Activated CD8-positive, alpha-beta T cell treated with anti-CD3 and anti-CD28 coated beads, Interleukin-2, amount 10 ng/mL, durations not matched to agents 7 days and 5 days (primary cell): ENCODE measurements at regions of chr16 and their contacts with region 1.

Region 1: DNA sequence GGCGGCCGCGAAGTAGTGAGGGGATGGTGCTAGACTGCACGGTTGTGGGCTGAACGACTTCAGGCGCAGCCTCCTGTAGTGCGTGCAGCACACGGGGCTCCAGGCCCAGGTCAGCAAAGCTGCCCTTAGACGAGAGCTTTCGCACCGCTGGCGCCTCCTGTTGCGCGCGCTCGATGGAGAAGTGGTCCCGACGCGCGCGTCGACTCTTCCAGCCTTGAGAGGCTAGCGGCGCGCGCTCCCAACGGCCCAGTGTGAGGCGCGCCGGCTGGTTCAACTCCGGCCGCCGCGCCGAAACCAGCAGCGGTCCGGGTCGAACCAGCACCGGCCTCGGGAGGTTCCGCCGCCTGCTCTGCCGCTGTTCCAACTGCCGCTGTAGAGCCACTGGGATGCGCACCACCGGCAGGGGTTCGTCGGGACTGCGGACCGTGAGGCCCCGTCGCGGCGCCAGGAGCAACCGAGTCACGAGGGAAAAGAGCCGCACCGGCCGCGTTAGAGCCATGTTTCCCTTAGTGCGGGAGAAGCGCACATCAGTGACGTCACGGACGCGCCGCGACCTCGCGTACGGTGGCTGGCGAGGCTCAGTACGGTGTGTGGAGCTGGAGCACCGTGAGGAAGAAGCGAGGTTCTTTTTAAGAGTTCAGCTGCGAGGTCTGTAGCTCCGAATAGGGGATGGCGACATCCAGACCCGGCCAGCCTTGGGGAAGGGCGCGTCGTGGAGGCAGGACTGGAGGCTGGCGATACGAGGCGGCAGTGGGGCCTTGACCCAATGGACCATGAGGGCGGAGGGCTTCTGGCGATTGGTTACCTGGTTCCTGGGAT is at the starts of genes DDX28 and DUS2:
- DNase-seq: peak; percentile 95
- ATAC-seq: peak; percentile 92
- H3K4me3 Mint-ChIP-seq: peak within 1 kb of the TSS; percentile 94
- H3K27ac Mint-ChIP-seq: peak within 1 kb of the TSS; percentile 95
- H3K4me1 Mint-ChIP-seq: peaks cover 29% of the 10 kb centered on the region
- H3K27me3 Mint-ChIP-seq: no peaks in the 10 kb centered on the region
- total RNA-seq, gene DDX28: 13.6 to 13.9 TPM
- total RNA-seq, gene DUS2: 24.1 to 25.2 TPM

Region 2: GRCh38 chr16:67993189-67994039 is 29.5 kb before region 1 on chr16:
- CTCF ChIA-PET with region 1: interaction called, 16 read pairs
- POLR2A ChIA-PET with region 1: interaction called, 48 read pairs
- DNase-seq: peak; percentile 89
- ATAC-seq: peak; percentile 93
- H3K4me3 Mint-ChIP-seq: peak overlapping the region; percentile 78
- H3K27ac Mint-ChIP-seq: peak overlapping the region; percentile 97
- H3K4me1 Mint-ChIP-seq: peaks cover 42% of the 10 kb centered on the region
- H3K27me3 Mint-ChIP-seq: no peaks in the 10 kb centered on the region

Region 3: GRCh38 chr16:67999985-68000384 is 22.9 kb before region 1 on chr16:
- CTCF ChIA-PET with region 1: interaction called, 16 read pairs
- POLR2A ChIA-PET with region 1: interaction called, 48 read pairs
- DNase-seq: no peak
- ATAC-seq: peak; percentile 17
- H3K4me3 Mint-ChIP-seq: peak overlapping the region; percentile 60
- H3K27ac Mint-ChIP-seq: peak overlapping the region; percentile 82
- H3K4me1 Mint-ChIP-seq: peaks cover 45% of the 10 kb centered on the region
- H3K27me3 Mint-ChIP-seq: no peaks in the 10 kb centered on the region

Region 4: DNA sequence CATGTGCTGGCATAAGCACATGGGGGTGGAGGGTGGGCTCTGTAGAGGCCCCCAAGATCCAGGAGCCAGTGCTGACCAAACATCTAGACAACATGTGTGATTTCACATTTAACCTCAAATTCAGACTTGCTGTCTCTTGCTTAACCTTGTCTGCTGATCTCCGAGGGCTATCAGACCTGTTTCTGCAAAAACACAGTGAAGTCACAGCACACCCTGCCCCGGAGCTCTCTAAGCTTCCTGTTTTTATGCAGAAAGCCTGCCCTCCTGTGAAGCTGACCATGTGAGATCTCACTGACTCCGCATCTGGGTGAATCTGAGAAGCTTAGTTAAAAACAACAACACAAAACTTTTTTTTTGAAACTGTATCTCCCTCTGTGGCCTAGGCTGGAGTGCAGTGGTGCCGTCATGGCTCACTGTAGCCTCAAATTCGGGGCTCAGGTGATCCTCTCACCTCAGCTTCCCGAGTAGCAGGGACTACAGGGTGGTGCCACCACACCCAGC is 17.1 kb before region 1 on chr16:
- CTCF ChIA-PET with region 1: interaction called, 16 read pairs
- POLR2A ChIA-PET with region 1: interaction called, 14 read pairs
- DNase-seq: peak; percentile 56
- ATAC-seq: peak; percentile 91
- H3K4me3 Mint-ChIP-seq: no peak overlapping the region
- H3K27ac Mint-ChIP-seq: peak overlapping the region; percentile 90
- H3K4me1 Mint-ChIP-seq: peaks cover 20% of the 10 kb centered on the region
- H3K27me3 Mint-ChIP-seq: no peaks in the 10 kb centered on the region

Region 5: DNA sequence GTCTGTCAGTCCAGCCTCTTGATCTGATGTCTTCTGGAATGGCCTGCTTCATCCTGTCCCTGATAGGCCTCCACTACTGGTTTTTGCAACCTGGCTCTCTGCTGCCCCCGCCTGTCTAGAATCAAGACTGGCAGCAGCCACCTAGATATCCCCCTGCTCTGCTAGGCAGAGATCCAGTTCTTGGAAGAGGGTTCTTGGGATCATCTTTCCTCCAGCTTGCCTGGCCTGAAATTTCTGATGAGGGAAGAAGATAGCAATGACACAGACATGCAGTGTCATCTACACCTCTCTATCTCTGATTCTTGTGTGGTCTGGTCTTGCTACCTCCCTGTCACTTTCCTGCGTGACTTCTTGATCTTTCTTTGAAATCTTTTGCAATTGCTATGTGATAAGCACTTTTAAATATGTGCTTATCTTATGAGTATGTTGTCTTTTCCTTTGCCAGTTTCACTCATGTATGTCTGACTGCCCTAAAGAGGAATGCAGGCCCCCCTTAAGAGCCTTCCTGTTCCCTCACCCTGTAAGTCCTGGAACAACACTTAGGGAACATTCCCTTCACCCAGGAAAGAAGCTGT is 42.0 kb after region 1 on chr16:
- CTCF ChIA-PET with region 1: interaction called, 3 read pairs
- POLR2A ChIA-PET with region 1: interaction called, 10 read pairs
- DNase-seq: peak; percentile 87
- ATAC-seq: peak; percentile 74
- H3K4me3 Mint-ChIP-seq: no peak overlapping the region
- H3K27ac Mint-ChIP-seq: peak overlapping the region; percentile 88
- H3K4me1 Mint-ChIP-seq: peaks cover 85% of the 10 kb centered on the region
- H3K27me3 Mint-ChIP-seq: no peaks in the 10 kb centered on the region